Sigmoid colon (tissue), 7 donors: ENCODE measurements at regions of chr18 and their contacts with region 1.

Region 1: GRCh38 chr18:7272311-7273049 is 41.6 kb downstream of the LRRC30 start:
- DNase-seq: peak; percentile 85
- H3K4me3 ChIP-seq: peak overlapping the region in 3 of 4 donors; percentile 26 to 34 (median 33)
- H3K27ac ChIP-seq: peak overlapping the region; percentile 79 to 84 (median 81)
- H3K4me1 ChIP-seq: peaks cover 0 to 16% (median 13%) of the 10 kb centered on the region in 4 donors
- H3K27me3 ChIP-seq: no peaks in the 10 kb centered on the region
- CTCF ChIP-seq: peak; percentile 26 to 58 (median 42)
- EP300 ChIP-seq: no peak
- POLR2A ChIP-seq: no peak

Region 2: DNA sequence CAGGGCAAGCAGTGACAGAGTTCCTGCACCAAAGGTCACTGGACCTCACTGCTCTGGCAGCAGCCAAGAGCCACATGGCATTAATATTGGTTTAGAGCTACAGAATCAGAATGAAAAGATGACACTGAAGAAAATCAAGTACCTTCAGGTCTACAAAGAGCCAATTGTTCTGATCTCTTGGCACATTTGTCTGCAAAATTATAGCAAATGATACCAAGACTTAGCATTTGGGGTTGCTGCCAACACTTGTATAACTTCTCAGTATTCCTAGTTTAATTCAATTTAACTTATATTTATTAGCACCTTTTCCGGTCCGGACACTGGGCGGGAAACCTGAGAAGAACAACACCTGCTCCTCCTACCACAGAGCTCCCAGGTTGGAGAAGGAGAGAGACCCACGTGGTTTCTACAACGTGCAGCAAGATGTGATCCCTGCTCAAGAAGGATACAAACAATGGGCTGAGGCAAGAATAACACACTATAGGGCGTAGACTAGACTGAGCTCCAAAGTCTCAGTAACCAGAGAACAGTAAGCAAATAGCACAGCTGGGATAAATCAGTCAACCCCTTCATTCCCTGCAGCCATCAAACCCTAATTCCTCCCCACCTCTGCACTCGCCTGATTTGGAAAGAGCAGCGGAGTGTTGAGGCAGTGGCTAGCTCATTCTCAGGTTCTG is 39.2 kb before region 1 on chr18:
- intact Hi-C with region 1: no loop called
- DNase-seq: no peak
- H3K4me3 ChIP-seq: no peak overlapping the region
- H3K27ac ChIP-seq: no peak overlapping the region
- H3K4me1 ChIP-seq: no peaks in the 10 kb centered on the region
- H3K27me3 ChIP-seq: no peaks in the 10 kb centered on the region
- CTCF ChIP-seq: no peak
- EP300 ChIP-seq: no peak
- POLR2A ChIP-seq: no peak

Region 3: GRCh38 chr18:7452331-7452730 is 179.9 kb after region 1 on chr18:
- intact Hi-C with region 1: loop called (anchors 5 kb)
- DNase-seq: no peak
- H3K4me3 ChIP-seq: no peak overlapping the region
- H3K27ac ChIP-seq: no peak overlapping the region
- H3K4me1 ChIP-seq: no peaks in the 10 kb centered on the region
- H3K27me3 ChIP-seq: no peaks in the 10 kb centered on the region
- CTCF ChIP-seq: peak; percentile 7 to 59 (median 45)
- EP300 ChIP-seq: no peak
- POLR2A ChIP-seq: no peak

Region 4: DNA sequence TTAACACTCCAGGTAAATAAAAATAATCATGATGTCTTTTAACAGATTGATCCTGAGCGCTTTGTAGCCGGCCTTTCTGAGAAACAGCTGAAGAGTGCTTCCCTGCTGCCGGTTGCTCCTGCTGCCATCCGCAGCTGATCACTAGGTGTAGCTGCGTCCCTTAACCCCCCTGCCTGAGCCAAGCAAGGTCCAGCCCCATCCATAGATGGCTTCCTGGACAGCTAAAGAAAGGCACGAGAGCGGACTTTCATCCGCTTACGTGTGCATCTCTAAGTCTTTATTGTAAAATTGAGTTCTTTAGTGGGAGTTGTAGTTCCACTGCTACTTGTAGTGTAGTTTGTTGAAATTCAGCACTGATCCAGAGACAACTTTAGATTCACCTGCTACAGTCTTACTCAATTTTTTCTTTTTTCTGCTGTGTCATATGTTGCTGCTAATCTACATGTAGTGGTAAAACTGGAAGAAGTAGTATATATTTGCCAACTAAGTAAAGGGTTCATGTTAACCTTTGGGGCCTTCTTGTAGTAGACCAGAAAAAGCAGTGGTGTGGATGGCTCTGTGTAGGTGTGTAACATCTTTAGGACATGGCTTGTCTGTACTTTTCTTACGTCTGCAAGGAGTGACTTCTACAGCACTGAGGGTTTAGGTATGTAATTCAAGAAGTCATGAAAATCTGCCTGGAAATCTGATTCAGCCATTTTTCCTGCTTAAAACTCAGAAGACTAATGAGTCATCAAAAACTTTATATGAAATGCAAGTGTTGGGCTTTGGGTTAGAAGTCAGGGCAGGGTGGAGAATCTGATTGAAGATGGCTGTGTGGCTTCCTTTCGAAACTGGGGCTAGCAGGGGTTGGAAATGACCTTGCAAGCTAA is 302.9 kb after region 1 on chr18:
- intact Hi-C with region 1: no loop called
- DNase-seq: no peak
- H3K4me3 ChIP-seq: no peak overlapping the region
- H3K27ac ChIP-seq: no peak overlapping the region
- H3K4me1 ChIP-seq: peaks cover 0 to 48% (median 37%) of the 10 kb centered on the region in 4 donors
- H3K27me3 ChIP-seq: no peaks in the 10 kb centered on the region
- CTCF ChIP-seq: no peak
- EP300 ChIP-seq: no peak
- POLR2A ChIP-seq: no peak

Region 5: GRCh38 chr18:7778181-7778580 is 505.7 kb after region 1 on chr18:
- intact Hi-C with region 1: loop called (anchors 10 kb)
- DNase-seq: no peak
- H3K4me3 ChIP-seq: no peak overlapping the region
- H3K27ac ChIP-seq: no peak overlapping the region
- H3K4me1 ChIP-seq: peaks cover 0 to 13% (median 6%) of the 10 kb centered on the region in 4 donors
- H3K27me3 ChIP-seq: no peaks in the 10 kb centered on the region
- CTCF ChIP-seq: no peak
- EP300 ChIP-seq: no peak
- POLR2A ChIP-seq: no peak

Region 6: GRCh38 chr18:8389391-8390340 is 1117.2 kb after region 1 on chr18:
- intact Hi-C with region 1: loop called (anchors 2 kb)
- DNase-seq: peak; percentile 76
- H3K4me3 ChIP-seq: no peak overlapping the region
- H3K27ac ChIP-seq: no peak overlapping the region
- H3K4me1 ChIP-seq: no peaks in the 10 kb centered on the region
- H3K27me3 ChIP-seq: no peaks in the 10 kb centered on the region
- CTCF ChIP-seq: peak; percentile 35 to 73 (median 68)
- EP300 ChIP-seq: no peak
- POLR2A ChIP-seq: no peak

Region 7: DNA sequence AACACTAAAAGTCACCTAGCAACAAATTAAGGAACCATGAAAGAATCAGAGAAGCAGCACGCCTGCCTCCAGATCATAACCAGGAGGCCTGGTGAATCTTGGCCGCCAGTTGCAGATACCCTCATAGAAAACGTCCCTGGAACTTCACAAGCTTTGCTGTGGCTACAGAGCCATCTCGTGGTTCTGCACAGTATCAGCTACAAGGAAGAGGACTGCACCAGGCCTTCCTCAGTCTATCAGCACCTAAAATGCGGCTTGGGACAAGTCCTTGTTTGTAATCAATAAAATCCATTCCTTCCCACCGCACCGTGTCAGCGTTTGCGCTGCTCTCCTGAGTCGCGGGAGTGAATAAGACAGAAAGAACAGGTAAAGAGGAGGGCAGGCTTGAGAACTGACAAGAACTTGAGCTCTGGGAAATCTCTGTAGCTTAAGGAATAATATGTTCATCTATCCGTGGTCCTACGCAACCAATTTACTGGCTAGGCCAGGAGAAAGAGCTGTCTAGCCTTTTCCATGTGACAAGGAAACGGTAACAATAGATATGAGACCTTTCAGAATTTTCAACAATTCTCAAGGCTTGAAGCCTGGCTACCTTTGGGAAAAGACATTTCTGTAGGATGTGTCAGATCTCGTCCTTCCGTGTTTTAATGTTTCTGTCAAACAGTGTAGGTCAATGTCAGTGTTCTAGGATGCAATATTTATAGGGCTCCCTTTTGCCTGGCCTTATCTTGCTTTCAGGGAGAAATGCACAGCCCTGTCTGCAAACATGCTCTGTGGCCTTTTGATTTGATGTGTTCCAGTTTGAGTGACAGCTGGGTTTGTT is 1208.2 kb after region 1 on chr18:
- intact Hi-C with region 1: loop called (anchors 1 kb)
- DNase-seq: peak; percentile 73
- H3K4me3 ChIP-seq: no peak overlapping the region
- H3K27ac ChIP-seq: no peak overlapping the region
- H3K4me1 ChIP-seq: peaks cover 0 to 9% (median 0%) of the 10 kb centered on the region in 4 donors
- H3K27me3 ChIP-seq: no peaks in the 10 kb centered on the region
- CTCF ChIP-seq: peak in 3 of 4 experiments; percentile 20 to 53 (median 45)
- EP300 ChIP-seq: no peak
- POLR2A ChIP-seq: no peak